ENCODE measurements at regions of chr7 and their contacts with region 1.

Region 1: GRCh38 chr7:155961241-155962190 is 149.3 kb upstream of the SHH start:
- DNase-seq: no peak
- H3K4me3 Mint-ChIP-seq: no peak overlapping the region
- H3K27ac Mint-ChIP-seq: no peak overlapping the region
- H3K4me1 Mint-ChIP-seq: peaks cover 21% of the 10 kb centered on the region
- H3K27me3 Mint-ChIP-seq: peaks cover 10% of the 10 kb centered on the region

Region 2: DNA sequence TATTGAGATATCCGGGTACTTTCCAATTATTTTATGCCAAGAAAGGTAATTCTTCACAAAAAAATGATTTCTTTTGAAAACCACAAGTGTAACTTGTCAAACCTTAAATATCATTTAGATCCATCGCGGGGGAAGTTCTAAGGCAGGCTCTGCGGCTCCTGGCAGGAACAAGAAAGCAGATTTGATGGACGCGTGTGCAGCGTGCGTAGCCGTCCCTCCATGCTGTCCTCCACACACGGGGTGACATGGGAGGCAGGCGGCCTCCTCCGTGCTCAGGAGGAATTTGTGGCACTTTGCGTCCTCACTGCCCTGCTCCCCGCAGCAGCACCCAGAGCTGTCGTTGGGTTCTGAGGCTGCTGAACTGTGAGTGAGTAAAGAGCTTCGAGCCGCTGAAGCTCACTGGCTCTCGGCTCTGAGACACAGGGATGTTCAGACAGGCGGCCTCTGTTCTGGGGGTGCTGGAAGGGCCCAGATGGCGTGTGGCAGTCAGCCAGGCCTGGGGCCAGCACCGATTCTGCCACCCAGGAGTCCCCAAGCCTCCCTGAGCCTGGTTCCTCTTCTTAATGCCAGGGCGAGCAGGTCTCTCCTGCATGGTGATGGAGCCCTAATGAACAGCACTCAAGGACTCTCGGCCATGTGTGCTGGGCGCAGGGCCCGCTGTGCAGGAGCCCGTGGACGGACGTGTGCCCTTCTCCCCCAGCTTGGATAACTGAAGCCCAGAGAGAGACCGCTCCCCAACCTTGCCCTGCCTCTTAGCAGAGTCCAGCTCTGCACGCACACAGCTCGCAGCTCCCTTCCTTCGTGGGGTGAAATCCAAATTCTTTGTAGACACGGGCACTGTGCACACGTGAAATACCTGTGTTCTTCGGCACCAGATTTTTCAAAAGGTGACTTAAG is 36.2 kb after region 1 on chr7:
- intact Hi-C with region 1: loop called (anchors 1 kb)
- DNase-seq: no peak
- H3K4me3 Mint-ChIP-seq: peak overlapping the region; percentile 43
- H3K27ac Mint-ChIP-seq: no peak overlapping the region
- H3K4me1 Mint-ChIP-seq: peaks cover 31% of the 10 kb centered on the region
- H3K27me3 Mint-ChIP-seq: peaks cover 42% of the 10 kb centered on the region

Measured in activated T-helper 2 cell treated with anti-CD3 and anti-CD28 coated beads, Interferon-gamma antibody, Interleukin-2, Interleukin-4, amounts not matched to agents 10 μg/mL and 5 μg/mL and 100 μg/mL, durations not matched to agents 14 hours and 24 hours and 36 hours (primary cell).